ENCODE measurements at regions of chr19 and their contacts with region 1.

Region 1: GRCh38 chr19:52962394-52963246 is at the start of gene ZNF816:
- DNase-seq: peak; percentile 97 to 99 (median 97)
- H3K4me3 ChIP-seq: peak within 1 kb of the TSS; percentile 72 to 91
- H3K4me3 Mint-ChIP-seq: peak within 1 kb of the TSS; percentile 90 to 98 (median 93)
- H3K27ac ChIP-seq: peak within 1 kb of the TSS; percentile 51
- H3K27ac Mint-ChIP-seq: peak within 1 kb of the TSS; percentile 89 to 96 (median 92)
- H3K4me1 ChIP-seq: peaks cover 25% of the 10 kb centered on the region
- H3K4me1 Mint-ChIP-seq: peaks cover 13 to 34% (median 24%) of the 10 kb centered on the region in 4 donors
- H3K27me3 ChIP-seq: no peaks in the 10 kb centered on the region
- H3K27me3 Mint-ChIP-seq: peaks cover 0 to 1% of the 10 kb centered on the region in 2 donors
- total RNA-seq, gene ZNF816: 26.1 to 29.6 TPM

Region 2: GRCh38 chr19:52637718-52638585 is 324.7 kb before region 1 on chr19 and contains the start of gene ZNF83:
- CTCF ChIA-PET with region 1: no interaction called
- POLR2A ChIA-PET with region 1: no interaction called
- intact Hi-C with region 1: loop called (anchors 5 kb)
- DNase-seq: peak; percentile 85 to 95 (median 92)
- H3K4me3 ChIP-seq: peak within 1 kb of the TSS; percentile 72 to 98
- H3K4me3 Mint-ChIP-seq: peak within 1 kb of the TSS; percentile 91 to 99 (median 97)
- H3K27ac ChIP-seq: peak within 1 kb of the TSS; percentile 87
- H3K27ac Mint-ChIP-seq: peak within 1 kb of the TSS; percentile 90 to 99 (median 98)
- H3K4me1 ChIP-seq: peaks cover 20% of the 10 kb centered on the region
- H3K4me1 Mint-ChIP-seq: peaks cover 10 to 23% (median 16%) of the 10 kb centered on the region in 4 donors
- H3K27me3 ChIP-seq: no peaks in the 10 kb centered on the region
- H3K27me3 Mint-ChIP-seq: no peaks in the 10 kb centered on the region
- total RNA-seq, gene ZNF83: 128 to 130 TPM

Region 3: GRCh38 chr19:52871446-52872120 is 91.0 kb before region 1 on chr19:
- CTCF ChIA-PET with region 1: no interaction called
- POLR2A ChIA-PET with region 1: no interaction called
- intact Hi-C with region 1: no loop called
- DNase-seq: no peak
- H3K4me3 ChIP-seq: no peak overlapping the region
- H3K4me3 Mint-ChIP-seq: no peak overlapping the region
- H3K27ac ChIP-seq: no peak overlapping the region
- H3K27ac Mint-ChIP-seq: no peak overlapping the region
- H3K4me1 ChIP-seq: no peaks in the 10 kb centered on the region
- H3K4me1 Mint-ChIP-seq: no peaks in the 10 kb centered on the region
- H3K27me3 ChIP-seq: no peaks in the 10 kb centered on the region
- H3K27me3 Mint-ChIP-seq: no peaks in the 10 kb centered on the region

Region 4: GRCh38 chr19:52897144-52897935 is 65.3 kb before region 1 on chr19 and contains the start of gene ZNF320:
- CTCF ChIA-PET with region 1: interaction called, 3 read pairs
- POLR2A ChIA-PET with region 1: interaction called, 3 read pairs
- intact Hi-C with region 1: loop called (anchors 1 kb)
- DNase-seq: peak; percentile 88 to 92 (median 89)
- H3K4me3 ChIP-seq: peak within 1 kb of the TSS; percentile 77 to 95
- H3K4me3 Mint-ChIP-seq: peak within 1 kb of the TSS; percentile 90 to 96 (median 94)
- H3K27ac ChIP-seq: peak within 1 kb of the TSS; percentile 69
- H3K27ac Mint-ChIP-seq: peak within 1 kb of the TSS; percentile 83 to 97 (median 94)
- H3K4me1 ChIP-seq: peaks cover 14% of the 10 kb centered on the region
- H3K4me1 Mint-ChIP-seq: peaks cover 3 to 24% (median 22%) of the 10 kb centered on the region in 4 donors
- H3K27me3 ChIP-seq: no peaks in the 10 kb centered on the region
- H3K27me3 Mint-ChIP-seq: no peaks in the 10 kb centered on the region
- total RNA-seq, gene ZNF320: 14.1 to 15.6 TPM

Region 5: GRCh38 chr19:52942386-52943133 is 20.1 kb before region 1 on chr19:
- CTCF ChIA-PET with region 1: interaction called, 3 read pairs
- POLR2A ChIA-PET with region 1: interaction called, 10 read pairs
- intact Hi-C with region 1: loop called (anchors 1 kb)
- DNase-seq: peak; percentile 95 to 98 (median 97)
- H3K4me3 ChIP-seq: peak overlapping the region; percentile 68 to 84
- H3K4me3 Mint-ChIP-seq: peak overlapping the region; percentile 88 to 98 (median 96)
- H3K27ac ChIP-seq: peak overlapping the region; percentile 72
- H3K27ac Mint-ChIP-seq: peak overlapping the region; percentile 91 to 98 (median 95)
- H3K4me1 ChIP-seq: peaks cover 17% of the 10 kb centered on the region
- H3K4me1 Mint-ChIP-seq: peaks cover 10 to 32% (median 24%) of the 10 kb centered on the region in 4 donors
- H3K27me3 ChIP-seq: no peaks in the 10 kb centered on the region
- H3K27me3 Mint-ChIP-seq: no peaks in the 10 kb centered on the region

Region 6: DNA sequence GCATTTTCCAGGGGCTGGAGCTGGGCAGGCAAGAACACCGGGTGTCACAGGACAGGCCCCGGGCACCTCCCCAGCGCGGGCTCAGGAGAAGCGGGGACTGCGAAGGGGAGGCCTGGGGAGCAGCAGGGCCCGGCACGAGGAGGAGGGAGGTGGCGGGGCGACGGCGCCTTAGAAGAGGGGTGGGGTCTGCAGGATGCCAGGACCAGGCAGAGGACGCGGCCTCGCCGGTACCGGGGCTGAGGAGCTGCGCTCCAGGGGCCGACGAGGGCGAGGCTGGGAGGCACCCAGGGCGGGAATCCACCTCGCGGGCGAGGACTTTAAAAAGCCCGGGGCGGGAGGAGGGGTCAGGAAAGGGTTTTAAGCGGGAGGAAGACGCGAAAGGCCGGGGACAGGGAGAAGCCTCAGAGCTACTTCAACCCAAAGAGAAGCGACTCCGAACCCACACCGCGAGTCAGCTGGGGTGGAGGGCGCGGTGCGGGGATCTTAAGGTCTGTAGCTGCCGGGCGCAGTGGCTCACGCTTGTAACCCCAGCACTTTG is 195.6 kb after region 1 on chr19:
- CTCF ChIA-PET with region 1: no interaction called
- POLR2A ChIA-PET with region 1: no interaction called
- intact Hi-C with region 1: loop called (anchors 2 kb)
- DNase-seq: peak in 3 of 5 donors; percentile 12 to 57 (median 21)
- H3K4me3 ChIP-seq: peak overlapping the region; percentile 29 to 58
- H3K4me3 Mint-ChIP-seq: peak overlapping the region; percentile 86 to 89 (median 88)
- H3K27ac ChIP-seq: peak overlapping the region; percentile 44
- H3K27ac Mint-ChIP-seq: peak overlapping the region in 6 of 7 donors; percentile 82 to 90 (median 88)
- H3K4me1 ChIP-seq: peaks cover 18% of the 10 kb centered on the region
- H3K4me1 Mint-ChIP-seq: peaks cover 11 to 30% (median 13%) of the 10 kb centered on the region in 4 donors
- H3K27me3 ChIP-seq: no peaks in the 10 kb centered on the region
- H3K27me3 Mint-ChIP-seq: peaks cover 0 to 6% of the 10 kb centered on the region in 2 donors